AG04450 (cell line): ENCODE measurements at regions of chr12 and their contacts with region 1.

Region 1: GRCh38 chr12:56571126-56571525 is 49.5 kb downstream of the RBMS2 start:
- DNase-seq: no peak
- H3K4me3 ChIP-seq: no peak overlapping the region
- H3K27ac ChIP-seq: peak overlapping the region; percentile 22
- H3K27me3 ChIP-seq: no peaks in the 10 kb centered on the region
- CTCF ChIP-seq: no peak

Region 2: GRCh38 chr12:56333679-56334489 is 237.2 kb before region 1 on chr12 and contains the start of gene PAN2:
- CTCF ChIA-PET with region 1: interaction called, 12 read pairs
- POLR2A ChIA-PET with region 1: no interaction called
- DNase-seq: peak; percentile 90
- H3K4me3 ChIP-seq: peak within 1 kb of the TSS; percentile 67
- H3K27ac ChIP-seq: peak within 1 kb of the TSS; percentile 91
- H3K27me3 ChIP-seq: no peaks in the 10 kb centered on the region
- CTCF ChIP-seq: peak; percentile 84
- polyA plus RNA-seq, gene PAN2: 18.5 and 22.2 TPM in 2 replicates

Region 3: GRCh38 chr12:56510786-56511185 is 60.3 kb before region 1 on chr12:
- CTCF ChIA-PET with region 1: interaction called, 110 read pairs
- POLR2A ChIA-PET with region 1: interaction called, 10 read pairs
- DNase-seq: no peak
- H3K4me3 ChIP-seq: no peak overlapping the region
- H3K27ac ChIP-seq: no peak overlapping the region
- H3K27me3 ChIP-seq: peaks cover 2% of the 10 kb centered on the region
- CTCF ChIP-seq: no peak

Region 4: GRCh38 chr12:56521590-56522371 is 49.3 kb before region 1 on chr12 and contains the start of gene RBMS2:
- CTCF ChIA-PET with region 1: interaction called, 110 read pairs
- POLR2A ChIA-PET with region 1: interaction called, 11 read pairs
- DNase-seq: peak; percentile 83
- H3K4me3 ChIP-seq: peak within 1 kb of the TSS; percentile 82
- H3K27ac ChIP-seq: peak within 1 kb of the TSS; percentile 86
- H3K27me3 ChIP-seq: no peaks in the 10 kb centered on the region
- CTCF ChIP-seq: no peak
- polyA plus RNA-seq, gene RBMS2: 96.4 and 117 TPM in 2 replicates

Region 5: DNA sequence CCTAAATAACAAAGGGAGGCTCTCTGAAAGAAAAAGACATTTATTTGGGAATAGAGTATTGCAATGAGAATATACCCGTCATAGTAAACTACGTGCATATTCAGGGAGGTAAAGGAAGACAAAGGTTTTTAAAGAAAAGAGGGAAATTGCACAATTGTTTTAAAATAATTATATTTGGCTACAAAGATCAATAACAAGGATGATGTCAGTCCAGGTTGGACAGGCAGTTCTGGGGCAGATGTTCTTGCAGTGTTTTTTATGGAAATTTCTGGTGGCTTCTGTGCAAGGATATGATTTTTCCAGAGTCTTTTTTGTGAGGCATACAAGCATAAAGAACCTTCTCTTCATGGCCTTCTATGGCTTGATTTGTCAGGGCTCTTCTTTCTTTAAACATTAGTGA is 221.6 kb after region 1 on chr12:
- CTCF ChIA-PET with region 1: no interaction called
- POLR2A ChIA-PET with region 1: no interaction called
- DNase-seq: no peak
- H3K4me3 ChIP-seq: no peak overlapping the region
- H3K27ac ChIP-seq: no peak overlapping the region
- H3K27me3 ChIP-seq: peaks cover 6% of the 10 kb centered on the region
- CTCF ChIP-seq: no peak

Region 6: DNA sequence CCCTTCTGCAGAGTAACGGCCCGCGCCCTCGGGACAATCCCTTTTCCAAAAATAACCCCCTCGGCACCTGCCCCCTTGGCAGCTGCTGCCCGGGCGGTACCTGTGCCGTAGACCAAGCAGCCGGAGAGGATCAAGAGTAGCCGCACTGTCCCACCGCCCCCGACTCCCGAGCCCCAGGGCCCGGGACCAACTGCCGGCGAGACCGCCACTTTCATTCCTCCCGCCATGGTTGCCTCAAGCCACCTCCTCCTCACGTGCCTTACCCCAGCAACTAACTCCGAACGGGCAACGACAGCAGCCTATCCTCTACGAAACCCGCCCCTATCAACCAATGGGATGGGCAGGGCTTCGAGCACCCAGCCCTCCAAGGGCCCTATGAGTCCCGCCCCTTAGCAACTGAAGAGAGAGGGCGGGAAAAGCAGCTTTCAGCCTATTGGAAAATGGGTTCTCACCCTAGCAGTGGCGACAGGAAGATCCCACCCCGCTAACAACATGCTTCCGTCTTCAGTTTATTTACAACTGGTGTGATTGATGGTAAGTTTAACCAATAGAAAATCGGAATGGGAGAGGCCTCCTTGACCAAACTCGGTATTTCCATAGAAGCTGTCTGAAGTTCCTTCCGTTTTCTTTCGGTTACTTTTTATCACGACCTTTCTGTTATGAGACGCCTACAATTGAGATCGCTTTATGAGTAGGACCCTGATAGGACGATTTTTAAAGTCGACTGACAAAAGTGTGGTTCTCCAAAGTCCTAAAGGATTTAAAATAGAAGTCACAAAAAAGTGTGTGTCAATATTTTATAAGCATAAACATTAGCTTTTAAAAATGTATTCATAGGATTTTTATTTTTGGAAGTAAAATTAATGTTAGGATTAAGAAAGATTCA is 507.6 kb after region 1 on chr12 and contains the start of gene NEMP1:
- CTCF ChIA-PET with region 1: no interaction called
- POLR2A ChIA-PET with region 1: no interaction called
- DNase-seq: peak; percentile 100
- H3K4me3 ChIP-seq: peak within 1 kb of the TSS; percentile 82
- H3K27ac ChIP-seq: peak within 1 kb of the TSS; percentile 65
- H3K27me3 ChIP-seq: no peaks in the 10 kb centered on the region
- CTCF ChIP-seq: no peak
- polyA plus RNA-seq, gene NEMP1: 8.3 and 11.9 TPM in 2 replicates